ENCODE measurements at regions of chr2 and their contacts with region 1.

Region 1: DNA sequence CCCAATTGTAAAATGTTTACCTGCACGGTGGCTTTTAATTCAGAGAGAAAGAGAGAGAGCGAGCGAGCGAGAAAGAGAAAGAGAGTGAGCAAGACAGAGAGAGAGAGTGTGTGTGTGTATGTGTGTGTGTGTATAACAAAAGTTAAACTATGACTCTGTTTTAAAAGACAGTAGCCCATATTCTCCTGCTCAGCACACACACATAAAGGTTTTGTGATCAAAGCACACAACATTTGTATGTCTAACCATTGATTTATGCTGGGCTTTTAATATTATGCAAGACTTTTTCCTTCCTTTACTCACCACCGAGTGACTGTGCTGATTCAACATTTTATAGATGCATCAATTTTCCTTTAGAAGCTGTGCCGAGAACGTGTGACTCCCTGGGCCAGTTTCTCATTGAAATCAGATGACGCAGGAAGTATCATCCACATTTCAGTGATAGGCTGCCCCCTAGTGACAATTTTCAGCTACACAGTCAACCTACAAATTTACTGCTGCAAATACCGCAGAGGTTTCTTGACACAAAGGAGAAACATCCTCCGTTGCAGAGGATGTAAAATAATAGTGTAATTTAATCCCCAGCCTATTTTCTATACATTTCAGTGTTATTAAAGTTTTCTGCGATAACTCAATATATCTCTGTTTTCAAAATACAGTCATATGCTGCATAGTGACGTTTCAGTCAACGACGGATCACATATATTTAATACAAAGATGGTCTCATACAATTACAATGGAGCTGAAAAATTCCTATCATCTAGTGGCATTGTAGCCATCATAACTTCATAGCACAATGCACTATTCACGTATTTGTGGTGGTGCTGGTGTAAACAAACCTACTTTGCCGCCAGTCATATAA is 165.9 kb upstream of the TANK start:
- DNase-seq: peak; percentile 93
- H3K4me3 ChIP-seq: peak overlapping the region in 3 of 4 donors; percentile 16 to 34 (median 23)
- H3K27ac ChIP-seq: peak overlapping the region in 3 of 4 donors; percentile 63 to 78 (median 69)
- H3K4me1 ChIP-seq: peaks cover 0 to 32% (median 8%) of the 10 kb centered on the region in 4 donors
- H3K27me3 ChIP-seq: no peaks in the 10 kb centered on the region
- CTCF ChIP-seq: peak; percentile 57 to 92 (median 81)
- EP300 ChIP-seq: peak in 3 of 4 donors; percentile 64 to 72 (median 68)
- POLR2A ChIP-seq: no peak

Region 2: GRCh38 chr2:160109936-160110673 is 884.3 kb before region 1 on chr2:
- intact Hi-C with region 1: loop called (anchors 1 kb)
- DNase-seq: peak; percentile 81
- H3K4me3 ChIP-seq: no peak overlapping the region
- H3K27ac ChIP-seq: no peak overlapping the region
- H3K4me1 ChIP-seq: peaks cover 0 to 5% (median 0%) of the 10 kb centered on the region in 4 donors
- H3K27me3 ChIP-seq: no peaks in the 10 kb centered on the region
- CTCF ChIP-seq: peak; percentile 63 to 81 (median 73)
- EP300 ChIP-seq: no peak
- POLR2A ChIP-seq: no peak

Region 3: DNA sequence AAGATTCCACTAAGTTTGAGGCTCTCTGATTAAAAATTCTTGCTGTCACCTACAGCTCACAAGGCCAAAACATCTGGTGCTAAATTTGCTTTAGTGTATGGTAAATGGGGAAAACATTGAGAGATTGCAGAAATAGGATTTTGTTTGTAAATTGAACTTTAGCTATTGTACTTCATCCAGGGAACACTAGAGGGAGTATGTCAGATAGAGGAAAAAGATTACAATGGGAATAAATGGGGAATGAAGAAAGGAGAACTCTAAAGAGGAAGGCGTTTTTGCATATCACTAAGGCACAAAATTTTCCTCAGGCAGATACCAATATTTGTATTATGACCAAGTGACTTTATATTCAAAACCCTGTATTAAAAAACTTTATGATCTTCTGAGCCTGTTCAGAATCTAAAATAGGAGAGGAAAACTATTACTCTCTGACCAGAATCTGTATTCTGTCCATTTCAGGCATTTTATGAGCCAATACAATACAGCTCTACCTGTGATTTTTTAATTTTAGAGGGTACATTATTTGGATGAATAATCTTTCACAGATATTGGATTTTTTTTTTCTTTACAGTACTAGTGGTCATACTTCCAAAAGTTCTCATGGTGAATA is 742.0 kb before region 1 on chr2:
- intact Hi-C with region 1: loop called (anchors 1 kb)
- DNase-seq: no peak
- H3K4me3 ChIP-seq: no peak overlapping the region
- H3K27ac ChIP-seq: no peak overlapping the region
- H3K4me1 ChIP-seq: peaks cover 0 to 15% (median 8%) of the 10 kb centered on the region in 4 donors
- H3K27me3 ChIP-seq: no peaks in the 10 kb centered on the region
- CTCF ChIP-seq: peak; percentile 70 to 84 (median 80)
- EP300 ChIP-seq: no peak
- POLR2A ChIP-seq: no peak

Region 4: DNA sequence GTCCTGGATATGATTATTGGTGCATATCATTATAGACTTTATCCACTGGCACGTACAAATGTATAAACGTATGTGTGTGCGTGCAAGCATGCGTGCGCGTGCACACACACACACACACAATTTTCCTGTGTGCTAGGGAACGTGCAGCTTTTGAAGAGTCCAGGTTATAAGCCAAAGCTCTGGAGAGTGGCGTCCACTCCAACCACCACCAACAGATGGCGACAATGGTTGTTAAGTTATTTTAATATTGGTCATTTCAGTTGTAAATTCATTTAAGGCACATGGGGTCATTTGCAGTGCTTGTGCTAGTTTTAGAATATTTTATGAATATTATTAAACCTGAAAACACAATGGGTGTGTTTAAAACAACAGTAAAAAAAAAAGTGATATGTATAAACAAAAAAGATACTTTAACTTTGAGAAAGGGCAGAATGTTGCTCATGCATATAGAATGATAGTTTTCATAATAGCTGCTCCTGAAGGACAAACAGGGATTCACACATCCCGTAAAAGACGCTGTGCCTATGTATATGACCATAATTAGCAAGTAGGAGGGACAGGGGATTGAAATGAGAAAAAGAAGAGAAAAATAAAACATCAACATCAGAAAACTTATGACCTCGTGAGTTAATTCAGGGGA is 670.1 kb before region 1 on chr2:
- intact Hi-C with region 1: loop called (anchors 5 kb)
- DNase-seq: peak; percentile 77
- H3K4me3 ChIP-seq: no peak overlapping the region
- H3K27ac ChIP-seq: peak overlapping the region in 2 of 4 donors; percentile 51 to 57
- H3K4me1 ChIP-seq: peaks cover 0 to 71% (median 62%) of the 10 kb centered on the region in 4 donors
- H3K27me3 ChIP-seq: no peaks in the 10 kb centered on the region
- CTCF ChIP-seq: peak; percentile 51 to 70 (median 64)
- EP300 ChIP-seq: no peak
- POLR2A ChIP-seq: no peak

Region 5: GRCh38 chr2:161136696-161137324 is 142.4 kb after region 1 on chr2:
- intact Hi-C with region 1: no loop called
- DNase-seq: no peak
- H3K4me3 ChIP-seq: peak overlapping the region in 3 of 4 donors; percentile 12 to 29 (median 26)
- H3K27ac ChIP-seq: peak overlapping the region; percentile 38 to 79 (median 70)
- H3K4me1 ChIP-seq: peaks cover 0 to 64% (median 45%) of the 10 kb centered on the region in 4 donors
- H3K27me3 ChIP-seq: no peaks in the 10 kb centered on the region
- CTCF ChIP-seq: no peak
- EP300 ChIP-seq: no peak
- POLR2A ChIP-seq: no peak

Region 6: GRCh38 chr2:161418715-161419637 is 424.6 kb after region 1 on chr2:
- intact Hi-C with region 1: no loop called
- DNase-seq: no peak
- H3K4me3 ChIP-seq: no peak overlapping the region
- H3K27ac ChIP-seq: no peak overlapping the region
- H3K4me1 ChIP-seq: peaks cover 0 to 50% (median 45%) of the 10 kb centered on the region in 4 donors
- H3K27me3 ChIP-seq: peaks cover 59 to 100% (median 91%) of the 10 kb centered on the region in 3 donors
- CTCF ChIP-seq: no peak
- EP300 ChIP-seq: no peak
- POLR2A ChIP-seq: no peak